PC-3 (cell line): ENCODE measurements at regions of chr5 and their contacts with region 1.

Region 1: GRCh38 chr5:146426853-146427618 is 20.1 kb upstream of the TCERG1 start:
- DNase-seq: peak; percentile 79
- ATAC-seq: peak; percentile 77
- H3K4me3 ChIP-seq: no peak overlapping the region
- H3K27ac ChIP-seq: no peak overlapping the region
- H3K4me1 ChIP-seq: no peaks in the 10 kb centered on the region
- H3K27me3 ChIP-seq: no peaks in the 10 kb centered on the region
- CTCF ChIP-seq: peak; percentile 93

Region 2: DNA sequence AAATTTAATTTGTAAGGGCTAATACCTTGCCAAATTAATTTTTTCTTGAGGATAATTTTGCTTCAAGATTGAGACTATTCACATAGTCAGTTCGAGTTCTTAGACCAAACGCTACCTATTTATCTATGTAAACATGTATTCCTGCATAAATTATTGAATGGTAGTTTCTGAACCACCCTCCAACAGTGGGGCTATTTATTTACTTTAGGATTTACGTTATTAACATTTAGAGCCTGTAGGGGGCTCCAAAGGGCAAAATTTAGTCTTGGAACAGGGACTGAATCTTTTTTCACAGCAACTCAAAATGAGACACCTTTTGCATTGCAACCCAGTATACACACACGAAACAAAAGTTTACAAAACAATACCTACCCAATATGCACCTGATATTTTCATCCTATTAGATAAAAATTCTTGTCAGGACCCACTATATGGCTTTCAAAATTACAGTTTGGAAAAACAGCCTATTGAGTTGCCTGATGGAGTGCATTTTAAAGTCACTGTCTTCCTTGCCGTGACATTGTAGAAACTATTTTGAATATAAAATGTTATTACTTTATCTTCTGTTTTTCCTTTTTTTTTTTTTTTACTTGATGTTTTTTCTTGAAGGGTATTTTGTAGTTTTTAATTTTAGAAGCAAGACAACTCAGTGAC is 135.5 kb before region 1 on chr5:
- CTCF ChIA-PET with region 1: interaction called, 3 read pairs
- POLR2A ChIA-PET with region 1: no interaction called
- intact Hi-C with region 1: loop called (anchors 1 kb)
- DNase-seq: peak; percentile 77
- ATAC-seq: peak; percentile 63; the same call in 1 of the 2 replicates
- H3K4me3 ChIP-seq: no peak overlapping the region
- H3K27ac ChIP-seq: no peak overlapping the region
- H3K4me1 ChIP-seq: peaks cover 19% of the 10 kb centered on the region
- H3K27me3 ChIP-seq: no peaks in the 10 kb centered on the region
- CTCF ChIP-seq: peak; percentile 89

Region 3: DNA sequence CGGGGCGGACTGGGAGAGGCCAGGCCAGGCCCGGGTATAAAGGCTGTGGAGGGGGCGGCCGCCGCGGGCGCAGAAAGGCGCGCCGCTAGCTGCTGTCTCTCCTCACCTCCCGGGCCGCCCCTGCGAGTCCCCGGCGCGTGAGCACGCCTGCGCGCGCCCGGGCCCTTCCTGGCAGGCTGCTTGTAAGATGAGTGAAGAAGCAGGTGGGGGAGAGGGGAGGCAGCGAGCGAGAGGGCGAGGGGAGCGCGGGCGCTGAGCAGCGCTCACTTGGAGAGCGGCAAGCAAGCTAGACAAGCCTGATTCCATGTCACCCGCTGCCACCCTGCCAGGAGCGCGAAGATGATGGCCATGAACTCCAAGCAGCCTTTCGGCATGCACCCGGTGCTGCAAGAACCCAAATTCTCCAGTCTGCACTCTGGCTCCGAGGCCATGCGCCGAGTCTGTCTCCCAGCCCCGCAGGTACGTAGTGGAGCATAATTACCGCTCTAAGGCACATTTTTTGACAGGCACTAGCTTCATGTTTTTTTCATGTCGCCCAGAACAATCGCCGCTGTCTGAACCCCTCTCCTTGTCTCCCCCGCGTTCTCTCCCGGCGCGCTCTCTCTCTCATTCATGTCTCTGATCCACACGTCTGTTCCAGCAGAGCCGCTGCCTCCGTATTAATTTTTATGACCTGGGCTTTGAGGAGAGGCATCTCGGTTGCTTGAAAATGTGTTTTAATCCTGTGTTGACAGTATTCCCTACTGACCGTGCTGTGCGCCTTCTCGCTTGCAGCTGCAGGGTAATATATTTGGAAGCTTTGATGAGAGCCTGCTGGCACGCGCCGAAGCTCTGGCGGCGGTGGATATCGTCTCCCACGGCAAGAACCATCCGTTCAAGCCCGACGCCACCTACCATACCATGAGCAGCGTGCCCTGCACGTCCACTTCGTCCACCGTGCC is 88.0 kb before region 1 on chr5 and contains the start of gene POU4F3:
- CTCF ChIA-PET with region 1: no interaction called
- POLR2A ChIA-PET with region 1: no interaction called
- intact Hi-C with region 1: no loop called
- DNase-seq: no peak
- ATAC-seq: no peak
- H3K4me3 ChIP-seq: no peak within 1 kb of the TSS
- H3K27ac ChIP-seq: no peak within 1 kb of the TSS
- H3K4me1 ChIP-seq: no peaks in the 10 kb centered on the region
- H3K27me3 ChIP-seq: peaks cover 77% of the 10 kb centered on the region
- CTCF ChIP-seq: no peak
- total RNA-seq, gene POU4F3: not detected in 2 replicates